Posterior vena cava (tissue), 2 donors: ENCODE measurements at regions of chr11 and their contacts with region 1.

Region 1: DNA sequence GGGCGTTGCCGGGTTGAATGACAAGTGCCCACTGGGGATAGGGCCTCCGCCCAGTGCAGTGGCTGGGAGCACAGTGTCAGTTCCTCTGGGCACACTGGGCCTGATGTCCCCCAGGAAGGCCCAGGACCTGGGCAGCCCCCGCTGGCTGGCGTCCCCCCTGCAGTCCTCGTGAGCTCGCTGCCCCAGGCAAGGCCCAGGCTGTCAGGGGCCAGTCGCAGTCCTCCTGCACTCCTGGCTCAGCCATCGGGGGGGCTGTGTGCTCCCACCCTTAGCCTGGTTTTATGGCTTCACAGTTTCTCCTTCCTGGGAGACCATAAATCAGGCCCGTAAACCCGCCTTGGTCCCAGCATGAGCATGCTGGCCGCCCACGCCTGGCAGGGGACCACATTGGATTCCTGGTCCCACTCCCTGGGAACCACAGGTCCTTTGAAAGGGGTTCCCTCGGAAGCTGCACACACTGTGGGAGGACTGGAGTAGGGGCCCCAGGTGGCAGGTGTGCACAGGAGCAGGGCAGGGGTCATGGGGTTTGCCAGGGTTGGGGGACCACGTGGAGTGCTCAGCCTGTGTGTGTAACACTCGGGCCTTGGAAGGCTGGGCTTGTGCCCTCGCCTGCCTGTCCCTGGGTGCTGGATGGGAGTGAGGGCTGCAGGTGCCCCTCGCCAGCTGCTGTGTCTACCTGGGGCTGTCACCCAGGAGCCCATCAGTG is 113.6 kb downstream of the KCNQ1OT1 start:
- DNase-seq: peak; percentile 72

Region 2: GRCh38 chr11:2699531-2700414 is 113.5 kb after region 1 on chr11 and contains the start of gene KCNQ1OT1:
- intact Hi-C with region 1: loop called in 1 of 2 experiments (anchors 5 kb)
- DNase-seq: peak; percentile 96
- total RNA-seq, gene KCNQ1OT1: 1.8 to 3.5 TPM

Region 3: DNA sequence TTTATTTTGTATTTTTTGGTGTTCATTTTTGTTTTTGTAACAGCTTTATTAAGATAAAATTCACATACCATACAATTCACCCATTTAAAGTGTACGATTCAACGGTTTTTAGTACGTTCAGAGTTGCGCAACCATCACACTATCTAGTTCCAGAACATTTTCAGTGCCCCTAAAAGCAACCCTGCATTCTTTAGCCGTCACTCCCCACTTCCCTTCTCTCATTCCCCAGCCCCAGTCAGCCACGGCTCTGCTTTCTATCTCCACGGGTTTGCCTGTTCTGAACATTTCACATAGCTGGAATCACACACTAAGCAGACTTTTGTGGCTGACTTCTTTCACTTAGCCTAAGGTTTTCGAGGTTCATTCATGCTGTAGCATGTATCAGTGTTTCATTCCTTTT is 123.2 kb after region 1 on chr11:
- intact Hi-C with region 1: loop called in 1 of 2 experiments (anchors 1 kb)
- DNase-seq: peak; percentile 74